Activated CD4-positive, alpha-beta T cell treated with anti-CD3 and anti-CD28 coated beads, Interleukin-2, amount 10 ng/mL, durations not matched to agents 24 days and 14 days (primary cell): ENCODE measurements at regions of chr6 and their contacts with region 1.

Region 1: GRCh38 chr6:30489081-30490025 is at the start of gene HLA-E:
- DNase-seq: peak; percentile 98
- H3K4me3 Mint-ChIP-seq: peak within 1 kb of the TSS; percentile 100
- H3K27ac Mint-ChIP-seq: peak within 1 kb of the TSS; percentile 97
- H3K4me1 Mint-ChIP-seq: peaks cover 52% of the 10 kb centered on the region
- H3K27me3 Mint-ChIP-seq: no peaks in the 10 kb centered on the region
- total RNA-seq, gene HLA-E: 484 and 488 TPM in 2 replicates

Region 2: DNA sequence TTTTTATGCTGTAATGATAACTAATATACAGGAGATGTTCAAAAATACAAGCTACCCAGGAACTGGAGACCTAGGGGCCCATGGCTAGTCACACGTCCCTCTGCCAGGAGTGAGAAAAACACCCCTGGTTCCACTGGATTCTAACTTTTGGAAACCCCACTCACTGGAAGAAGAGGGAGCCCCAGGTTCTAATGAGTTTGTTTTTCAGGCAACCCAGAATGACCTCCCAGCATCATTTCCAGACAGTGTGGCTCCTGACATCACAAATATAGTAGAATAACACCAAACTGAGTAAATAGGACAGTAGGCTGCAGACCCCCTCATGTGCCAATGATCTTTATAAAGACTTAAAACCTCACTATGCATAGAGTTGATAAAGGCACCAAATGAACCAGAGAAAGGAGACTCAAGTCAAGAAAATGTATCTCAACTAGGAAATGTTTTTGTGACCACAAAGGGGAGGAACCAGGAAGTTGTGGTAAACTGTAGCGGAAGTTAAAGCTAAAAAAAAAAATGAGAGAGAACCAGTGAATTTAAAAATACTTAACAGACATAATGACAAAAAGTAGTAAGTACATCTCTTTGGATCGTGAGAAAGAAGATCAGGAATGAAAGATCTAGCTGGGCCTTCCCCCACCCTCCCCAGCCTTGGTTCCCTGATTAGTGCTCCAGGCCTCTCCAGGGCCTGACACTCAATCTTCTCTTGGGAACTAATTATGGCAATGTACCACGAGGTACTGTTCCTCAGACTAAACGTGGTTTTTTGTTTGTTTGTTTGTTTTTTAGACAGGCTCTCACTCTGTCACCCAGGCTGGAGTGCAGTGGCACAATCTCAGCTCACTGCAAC is 19.8 kb after region 1 on chr6:
- intact Hi-C with region 1: loop called (anchors 1 kb)
- DNase-seq: peak; percentile 89
- H3K4me3 Mint-ChIP-seq: peak overlapping the region; percentile 59
- H3K27ac Mint-ChIP-seq: peak overlapping the region; percentile 88
- H3K4me1 Mint-ChIP-seq: peaks cover 45% of the 10 kb centered on the region
- H3K27me3 Mint-ChIP-seq: no peaks in the 10 kb centered on the region

Region 3: GRCh38 chr6:30672445-30673253 is 183.3 kb after region 1 on chr6 and contains the start of gene DHX16:
- intact Hi-C with region 1: loop called (anchors 10 kb)
- DNase-seq: peak; percentile 97
- H3K4me3 Mint-ChIP-seq: peak within 1 kb of the TSS; percentile 80
- H3K27ac Mint-ChIP-seq: peak within 1 kb of the TSS; percentile 54
- H3K4me1 Mint-ChIP-seq: peaks cover 32% of the 10 kb centered on the region
- H3K27me3 Mint-ChIP-seq: no peaks in the 10 kb centered on the region
- total RNA-seq, gene DHX16: 53.4 and 56.7 TPM in 2 replicates